ENCODE measurements at regions of chr3 and their contacts with region 1.

Region 1: GRCh38 chr3:106013971-106014370 is 145.2 kb upstream of the CBLB start:
- DNase-seq: no peak
- H3K4me3 Mint-ChIP-seq: no peak overlapping the region
- H3K27ac Mint-ChIP-seq: peak overlapping the region; percentile 51
- H3K4me1 Mint-ChIP-seq: peaks cover 31% of the 10 kb centered on the region
- H3K27me3 Mint-ChIP-seq: no peaks in the 10 kb centered on the region

Region 2: DNA sequence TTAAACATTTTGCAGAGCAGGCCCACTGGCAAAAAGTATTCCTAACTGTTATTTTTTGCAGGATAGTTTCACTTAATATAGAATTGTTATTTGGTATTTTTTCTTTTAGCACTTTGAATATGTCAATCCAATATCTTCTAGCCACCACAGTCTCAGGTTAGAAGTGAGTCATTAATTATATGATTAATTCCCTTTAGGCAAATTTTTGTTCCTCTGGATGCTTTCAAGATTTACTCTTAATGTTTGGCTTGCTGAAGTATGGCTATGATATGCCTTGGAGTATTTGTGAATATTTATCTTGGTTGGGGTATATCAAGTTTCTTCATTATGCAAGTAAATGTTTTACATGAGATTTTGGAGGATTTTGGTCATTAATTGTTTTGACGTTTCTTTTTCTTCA is 799.4 kb before region 1 on chr3:
- intact Hi-C with region 1: no loop called
- DNase-seq: no peak
- H3K4me3 Mint-ChIP-seq: no peak overlapping the region
- H3K27ac Mint-ChIP-seq: no peak overlapping the region
- H3K4me1 Mint-ChIP-seq: no peaks in the 10 kb centered on the region
- H3K27me3 Mint-ChIP-seq: no peaks in the 10 kb centered on the region

Region 3: GRCh38 chr3:105662306-105662705 is 351.7 kb before region 1 on chr3:
- intact Hi-C with region 1: no loop called
- DNase-seq: no peak
- H3K4me3 Mint-ChIP-seq: no peak overlapping the region
- H3K27ac Mint-ChIP-seq: no peak overlapping the region
- H3K4me1 Mint-ChIP-seq: peaks cover 3% of the 10 kb centered on the region
- H3K27me3 Mint-ChIP-seq: no peaks in the 10 kb centered on the region

Region 4: GRCh38 chr3:105891101-105891500 is 122.9 kb before region 1 on chr3:
- intact Hi-C with region 1: loop called (anchors 2 kb)
- DNase-seq: no peak
- H3K4me3 Mint-ChIP-seq: no peak overlapping the region
- H3K27ac Mint-ChIP-seq: peak overlapping the region; percentile 36
- H3K4me1 Mint-ChIP-seq: peaks cover 9% of the 10 kb centered on the region
- H3K27me3 Mint-ChIP-seq: no peaks in the 10 kb centered on the region

Region 5: GRCh38 chr3:106068795-106069194 is 54.8 kb after region 1 on chr3:
- intact Hi-C with region 1: loop called (anchors 2 kb)
- DNase-seq: peak; percentile 74
- H3K4me3 Mint-ChIP-seq: peak overlapping the region; percentile 4
- H3K27ac Mint-ChIP-seq: peak overlapping the region; percentile 82
- H3K4me1 Mint-ChIP-seq: peaks cover 8% of the 10 kb centered on the region
- H3K27me3 Mint-ChIP-seq: no peaks in the 10 kb centered on the region

Region 6: DNA sequence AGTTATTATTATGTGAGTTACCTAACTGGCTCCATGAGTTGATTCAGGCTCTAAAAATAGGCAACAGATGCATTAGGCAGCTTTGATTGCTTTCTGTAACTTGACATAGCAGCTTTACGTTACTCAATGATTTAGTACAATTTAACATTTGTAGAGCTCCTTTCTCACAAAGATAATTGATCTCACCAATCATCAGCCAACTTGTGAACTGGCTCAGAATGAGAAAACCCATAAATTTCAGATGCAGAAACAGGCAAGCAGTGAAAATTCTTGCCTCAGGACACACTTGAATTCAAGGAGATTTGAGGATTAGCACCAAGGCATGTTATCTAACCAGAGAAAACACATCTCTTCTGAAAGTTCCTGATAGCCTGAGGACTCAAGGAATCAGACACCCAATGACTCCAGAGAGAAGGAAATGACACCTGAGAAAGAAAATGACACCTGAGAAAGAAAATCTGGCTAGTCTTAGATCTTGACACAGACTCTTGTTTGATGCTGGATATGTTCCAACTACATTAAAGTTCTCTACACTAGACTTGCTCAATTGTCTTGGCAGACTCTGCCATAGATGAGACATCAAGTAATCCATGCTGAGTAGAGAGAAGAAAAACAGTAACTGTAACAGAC is 169.9 kb after region 1 on chr3:
- intact Hi-C with region 1: loop called (anchors 2 kb)
- DNase-seq: no peak
- H3K4me3 Mint-ChIP-seq: peak overlapping the region; percentile 9
- H3K27ac Mint-ChIP-seq: peak overlapping the region; percentile 21
- H3K4me1 Mint-ChIP-seq: peaks cover 42% of the 10 kb centered on the region
- H3K27me3 Mint-ChIP-seq: no peaks in the 10 kb centered on the region

Region 7: DNA sequence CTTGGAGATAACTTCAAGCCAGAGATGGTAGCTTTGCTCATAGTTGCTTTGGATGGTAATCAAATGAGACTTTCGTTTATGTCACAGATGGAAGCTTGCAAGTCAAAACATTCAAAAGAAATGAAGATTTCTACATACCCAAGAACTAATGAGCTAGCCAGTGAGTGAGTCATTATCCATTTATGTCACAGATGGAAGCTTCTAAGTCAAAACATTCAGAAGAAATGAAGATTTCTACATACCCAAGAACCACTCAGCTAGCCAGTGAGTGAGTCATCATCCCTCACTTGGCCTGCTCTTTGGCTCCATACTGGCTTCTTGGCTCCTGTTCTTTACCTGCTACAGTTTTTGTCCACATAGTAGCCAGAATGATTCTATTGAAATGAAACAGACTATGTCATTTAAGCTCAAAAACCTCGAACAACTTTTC is 414.6 kb after region 1 on chr3:
- intact Hi-C with region 1: loop called (anchors 5 kb)
- DNase-seq: no peak
- H3K4me3 Mint-ChIP-seq: peak overlapping the region; percentile 25
- H3K27ac Mint-ChIP-seq: peak overlapping the region; percentile 96
- H3K4me1 Mint-ChIP-seq: peaks cover 42% of the 10 kb centered on the region
- H3K27me3 Mint-ChIP-seq: no peaks in the 10 kb centered on the region

Region 8: GRCh38 chr3:106609666-106610301 is 595.8 kb after region 1 on chr3:
- intact Hi-C with region 1: loop called (anchors 2 kb)
- DNase-seq: peak; percentile 90
- H3K4me3 Mint-ChIP-seq: no peak overlapping the region
- H3K27ac Mint-ChIP-seq: peak overlapping the region; percentile 83
- H3K4me1 Mint-ChIP-seq: peaks cover 24% of the 10 kb centered on the region
- H3K27me3 Mint-ChIP-seq: no peaks in the 10 kb centered on the region

Region 9: DNA sequence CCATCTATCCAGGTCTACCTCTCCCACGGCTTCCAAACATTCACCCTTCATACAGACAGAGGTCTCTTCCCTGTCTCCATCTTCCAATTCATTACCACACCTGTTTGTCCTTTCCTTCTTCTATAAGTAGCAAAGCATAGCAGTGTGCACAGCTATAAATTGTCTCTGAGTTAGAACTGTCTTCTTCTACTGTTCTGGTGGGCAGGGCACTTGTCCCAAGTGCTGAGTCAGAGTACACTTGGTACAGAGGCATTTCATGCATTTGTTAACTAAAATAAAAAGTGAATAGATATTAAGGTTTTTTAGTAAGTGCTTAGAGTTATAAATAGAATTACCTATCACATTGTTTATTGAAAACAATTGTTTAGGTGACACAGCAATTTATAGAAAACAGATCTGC is 1213.1 kb after region 1 on chr3:
- intact Hi-C with region 1: no loop called
- DNase-seq: no peak
- H3K4me3 Mint-ChIP-seq: no peak overlapping the region
- H3K27ac Mint-ChIP-seq: no peak overlapping the region
- H3K4me1 Mint-ChIP-seq: no peaks in the 10 kb centered on the region
- H3K27me3 Mint-ChIP-seq: peaks cover 32% of the 10 kb centered on the region